ENCODE measurements at regions of chr19 and their contacts with region 1.

Region 1: DNA sequence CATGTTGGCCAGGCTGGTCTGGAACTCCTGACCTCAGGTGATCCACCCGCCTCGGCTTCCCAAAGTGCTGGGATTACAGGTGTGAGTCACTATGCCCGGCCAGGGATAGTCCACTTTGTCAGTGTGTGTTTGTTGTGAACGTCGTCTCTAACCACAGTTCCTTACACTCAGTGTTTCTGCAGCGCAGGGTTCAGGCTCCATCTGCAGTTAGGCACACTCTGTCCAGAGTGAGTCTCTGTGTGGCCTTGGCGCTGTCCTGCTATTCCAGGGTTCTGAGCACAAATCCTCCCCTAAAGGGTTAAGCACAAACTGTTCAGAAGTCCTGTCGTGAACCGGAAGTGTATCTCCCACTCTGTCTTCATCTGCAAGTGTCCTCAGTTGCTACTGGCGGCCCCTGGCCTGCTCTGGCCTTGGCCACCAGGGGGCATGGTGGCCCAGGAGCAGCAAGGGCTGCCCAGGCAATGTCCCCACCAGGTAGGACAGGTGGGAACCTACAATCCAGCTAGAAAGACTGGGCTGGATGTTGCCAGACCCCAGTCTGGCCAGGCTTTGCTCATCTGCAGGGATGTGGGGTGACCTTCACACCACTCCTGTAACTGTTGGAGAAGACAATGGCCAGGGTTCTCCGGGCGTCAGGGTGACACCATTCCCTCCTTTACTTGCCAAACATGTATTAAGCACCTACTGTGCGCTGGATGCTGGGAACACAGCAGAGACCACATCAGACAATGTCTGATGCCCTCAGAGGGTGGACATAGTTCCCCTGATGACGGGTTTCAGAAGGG is 38.7 kb upstream of the GATAD2A start:
- DNase-seq: peak; percentile 69 to 90
- ATAC-seq: peak; percentile 86 to 91
- H3K4me3 ChIP-seq: no peak overlapping the region
- H3K27ac ChIP-seq: peak overlapping the region; percentile 44 to 79; a peak in 4 of 6 replicates
- H3K4me1 ChIP-seq: peaks cover 15% of the 10 kb centered on the region; the same call in 2 of the 3 replicates
- CTCF ChIP-seq: peak; percentile 73
- EP300 ChIP-seq: no peak
- POLR2A ChIP-seq: no peak
- RAD21 ChIP-seq: peak; percentile 68 to 77

Region 2: DNA sequence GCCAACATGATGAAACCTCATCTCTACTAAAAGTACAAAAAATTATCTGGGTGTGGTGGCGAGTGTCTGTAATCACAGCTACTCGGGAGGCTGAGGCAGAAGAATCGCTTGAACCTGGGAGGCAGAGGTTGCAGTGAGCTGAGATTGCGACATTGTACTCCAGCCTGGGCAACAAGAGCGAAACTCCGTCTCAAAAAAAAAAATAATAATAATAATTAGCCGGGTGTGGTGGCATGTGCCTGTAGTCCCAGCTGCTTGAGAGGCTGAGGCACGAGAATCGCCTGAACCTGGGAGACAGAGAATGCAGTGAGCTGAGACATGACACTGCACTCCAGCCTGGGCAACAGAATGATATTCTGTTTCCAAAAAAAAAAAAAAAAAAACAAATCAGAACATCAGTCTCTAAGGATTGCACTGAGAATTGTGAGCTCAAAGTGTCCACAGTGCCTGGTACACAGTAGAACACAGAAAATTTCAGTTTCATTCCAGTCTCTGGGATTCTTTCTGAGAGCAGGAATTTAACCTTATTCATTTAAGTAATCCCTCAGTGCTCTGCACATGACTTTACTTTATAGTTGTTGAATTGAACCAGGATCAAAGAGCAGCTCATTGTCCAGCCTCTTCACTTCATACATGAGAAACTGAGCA is 12.6 kb after region 1 on chr19:
- CTCF ChIA-PET with region 1: interaction called, 13 read pairs
- POLR2A ChIA-PET with region 1: no interaction called
- DNase-seq: no peak
- ATAC-seq: no peak
- H3K4me3 ChIP-seq: no peak overlapping the region
- H3K27ac ChIP-seq: no peak overlapping the region
- H3K4me1 ChIP-seq: peaks cover 6% of the 10 kb centered on the region; the same call in 2 of the 3 replicates
- CTCF ChIP-seq: no peak
- EP300 ChIP-seq: no peak
- POLR2A ChIP-seq: no peak
- RAD21 ChIP-seq: no peak

Region 3: DNA sequence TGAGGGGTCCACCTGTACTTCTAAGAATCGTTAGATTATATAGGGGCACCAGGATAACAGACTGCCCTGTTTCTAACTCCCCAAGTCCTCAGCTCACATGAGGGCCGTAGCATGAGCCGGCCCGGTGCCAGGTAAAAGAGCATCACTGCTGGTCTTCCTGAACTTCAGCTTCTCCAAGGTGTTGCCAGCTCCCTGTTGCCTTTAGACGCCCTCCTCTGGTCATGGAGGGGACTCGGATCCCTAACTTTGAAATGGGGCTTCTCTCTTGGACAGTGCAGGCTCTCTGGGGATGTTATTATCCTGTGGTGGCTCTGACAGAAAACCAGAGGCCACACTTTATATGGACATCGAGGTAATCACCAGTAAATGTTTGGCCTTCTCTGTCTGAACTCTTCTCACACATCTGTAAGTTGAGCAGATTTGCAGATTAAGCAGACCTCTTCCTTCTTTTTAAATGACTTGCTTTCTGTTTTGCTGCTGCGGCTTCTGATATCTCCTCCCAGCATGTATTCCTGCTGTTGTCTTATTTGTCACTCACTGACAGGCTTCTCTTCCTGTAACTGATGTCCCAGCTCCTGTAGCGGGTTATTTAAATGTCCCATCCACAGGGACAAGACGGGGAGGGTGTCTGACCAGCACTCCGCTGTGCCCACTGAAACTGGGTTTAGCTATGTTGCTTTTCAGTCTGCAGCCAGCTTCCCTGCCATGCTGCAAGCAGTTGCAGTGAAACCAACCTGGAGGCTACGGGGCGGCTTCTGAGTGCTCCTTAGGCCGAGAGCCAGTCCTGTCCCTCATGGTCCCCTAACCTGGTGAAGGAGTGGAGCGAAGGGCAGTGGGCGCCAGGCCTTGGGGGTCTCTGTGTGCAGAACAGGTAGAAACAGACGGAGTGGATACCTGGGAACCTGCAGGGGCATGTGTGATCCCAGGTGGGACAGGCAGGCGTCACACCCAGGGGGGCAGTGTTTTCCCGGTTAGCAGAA is 109.3 kb after region 1 on chr19:
- CTCF ChIA-PET with region 1: interaction called, 12 read pairs
- POLR2A ChIA-PET with region 1: no interaction called
- DNase-seq: peak; percentile 21 to 44
- ATAC-seq: peak; percentile 62 to 87; a peak in 5 of 6 replicates
- H3K4me3 ChIP-seq: no peak overlapping the region
- H3K27ac ChIP-seq: no peak overlapping the region
- H3K4me1 ChIP-seq: peaks cover 9% of the 10 kb centered on the region
- CTCF ChIP-seq: no peak
- EP300 ChIP-seq: no peak
- POLR2A ChIP-seq: no peak
- RAD21 ChIP-seq: peak in 1 of 2 experiments; percentile 37; a peak in 2 of 5 replicates

Measured in A549 (cell line).